ENCODE measurements at regions of chr2 and their contacts with region 1.

Region 1: DNA sequence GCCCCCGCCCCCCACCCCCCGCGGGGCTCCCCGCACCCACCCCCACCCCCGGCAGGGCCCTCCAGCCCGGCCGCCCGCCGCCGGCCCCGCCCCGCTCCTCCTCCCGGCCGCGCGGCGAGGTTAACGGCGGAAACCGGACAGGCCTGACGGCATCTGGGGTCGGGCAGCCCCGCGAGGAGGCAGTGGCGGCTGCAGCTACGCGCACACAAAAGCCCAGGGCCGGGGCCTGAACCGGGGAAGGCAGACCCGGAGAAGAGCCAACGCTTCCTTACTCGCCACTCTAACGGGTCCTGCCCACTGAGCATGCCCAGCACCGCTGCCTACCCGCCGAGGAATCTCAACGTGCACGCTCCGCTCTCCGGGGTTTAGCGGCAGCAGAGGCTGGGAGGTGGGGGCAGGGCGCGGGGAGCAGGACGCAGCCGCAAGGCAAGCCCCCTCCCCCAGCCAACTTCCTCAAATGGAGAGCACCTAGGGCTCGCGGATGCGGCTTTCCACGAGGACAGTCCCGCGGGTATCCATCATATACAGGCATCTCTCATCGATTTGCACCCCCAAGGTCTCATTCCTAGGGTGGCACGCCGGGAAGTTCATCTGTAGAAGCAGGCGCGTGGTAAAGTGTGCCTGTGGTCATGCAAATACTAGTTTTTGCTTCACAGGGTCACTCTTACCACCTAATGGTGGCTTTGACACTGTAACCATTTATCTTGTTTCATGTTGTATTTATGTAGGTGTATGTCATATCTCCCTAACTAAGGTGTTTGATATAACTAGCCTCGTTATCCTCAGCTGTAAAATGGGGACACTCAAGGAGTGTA is at the start of gene MEMO1:
- DNase-seq: peak; percentile 94
- H3K4me3 ChIP-seq: peak within 1 kb of the TSS; percentile 77 to 80
- H3K27ac ChIP-seq: peak within 1 kb of the TSS; percentile 90 to 93
- H3K4me1 ChIP-seq: peaks cover 18% of the 10 kb centered on the region
- H3K27me3 ChIP-seq: no peaks in the 10 kb centered on the region
- CTCF ChIP-seq: peak in 1 of 3 experiments; percentile 5
- POLR2A ChIP-seq: no peak
- total RNA-seq, gene MEMO1: 59.9 to 61.1 TPM

Region 2: GRCh38 chr2:30979822-30980245 is 1031.0 kb before region 1 on chr2:
- intact Hi-C with region 1: no loop called
- DNase-seq: peak; percentile 51
- H3K4me3 ChIP-seq: no peak overlapping the region
- H3K27ac ChIP-seq: peak overlapping the region in 1 of 2 donors; percentile 2
- H3K4me1 ChIP-seq: peaks cover 26% of the 10 kb centered on the region
- H3K27me3 ChIP-seq: no peaks in the 10 kb centered on the region
- CTCF ChIP-seq: no peak
- POLR2A ChIP-seq: no peak

Region 3: GRCh38 chr2:32063310-32064161 is 52.7 kb after region 1 on chr2 and contains the start of gene SPAST:
- intact Hi-C with region 1: loop called (anchors 10 kb)
- DNase-seq: peak; percentile 98
- H3K4me3 ChIP-seq: peak within 1 kb of the TSS; percentile 80 to 93
- H3K27ac ChIP-seq: peak within 1 kb of the TSS; percentile 81 to 92
- H3K4me1 ChIP-seq: no peaks in the 10 kb centered on the region
- H3K27me3 ChIP-seq: no peaks in the 10 kb centered on the region
- CTCF ChIP-seq: peak; percentile 36 to 75 (median 68)
- POLR2A ChIP-seq: no peak
- total RNA-seq, gene SPAST: 28.3 to 34.2 TPM